Caco-2 (cell line): ENCODE measurements at regions of chr12 and their contacts with region 1.

Region 1: GRCh38 chr12:85836197-85837090 is at the start of gene RASSF9:
- DNase-seq: peak; percentile 45 to 69
- H3K4me3 ChIP-seq: peak within 1 kb of the TSS; percentile 39
- H3K4me3 Mint-ChIP-seq: peak within 1 kb of the TSS; percentile 78
- H3K27ac Mint-ChIP-seq: peak within 1 kb of the TSS; percentile 83
- H3K4me1 ChIP-seq: peaks cover 8% of the 10 kb centered on the region
- H3K4me1 Mint-ChIP-seq: peaks cover 17% of the 10 kb centered on the region
- H3K27me3 ChIP-seq: no peaks in the 10 kb centered on the region
- H3K27me3 Mint-ChIP-seq: no peaks in the 10 kb centered on the region
- CTCF ChIP-seq: no peak
- total RNA-seq, gene RASSF9: 0.20 and 0.35 TPM in 2 replicates

Region 2: DNA sequence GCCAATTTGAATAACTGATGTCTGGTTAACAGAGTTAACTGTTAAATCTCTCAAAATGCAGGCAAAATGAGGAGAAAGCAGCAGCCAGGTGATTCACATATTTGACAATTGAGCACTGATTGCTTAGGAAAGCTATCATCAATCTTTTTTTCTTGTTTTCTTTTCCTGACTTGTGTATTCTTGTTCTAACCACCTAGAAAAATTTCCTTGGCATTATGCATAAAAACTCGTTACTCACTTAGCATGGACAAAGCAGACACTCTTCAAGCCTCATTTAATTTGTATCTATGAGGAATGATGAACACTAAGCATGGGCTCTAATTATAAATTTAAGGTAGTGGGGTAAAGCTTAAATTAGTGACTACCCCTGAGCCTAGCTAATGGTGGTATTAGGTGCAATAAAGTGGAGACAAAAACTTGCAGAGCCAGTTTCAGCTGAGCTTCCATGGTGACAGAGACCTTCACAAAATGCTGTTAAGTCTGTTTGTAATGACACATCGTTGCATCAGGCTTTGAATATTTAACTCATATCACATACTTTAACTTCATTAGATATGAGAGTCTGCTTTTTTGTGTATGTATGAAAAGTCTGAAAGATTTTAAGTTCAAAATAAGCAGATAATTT is 52.2 kb before region 1 on chr12:
- CTCF ChIA-PET with region 1: no interaction called
- POLR2A ChIA-PET with region 1: no interaction called
- intact Hi-C with region 1: no loop called
- DNase-seq: peak in 1 of 2 experiments; percentile 7
- H3K4me3 ChIP-seq: no peak overlapping the region
- H3K4me3 Mint-ChIP-seq: no peak overlapping the region
- H3K27ac Mint-ChIP-seq: no peak overlapping the region
- H3K4me1 ChIP-seq: peaks cover 16% of the 10 kb centered on the region; the same call in 1 of the 2 replicates
- H3K4me1 Mint-ChIP-seq: no peaks in the 10 kb centered on the region
- H3K27me3 ChIP-seq: no peaks in the 10 kb centered on the region
- H3K27me3 Mint-ChIP-seq: peaks cover 2% of the 10 kb centered on the region
- CTCF ChIP-seq: no peak

Region 3: GRCh38 chr12:85794531-85794930 is 41.9 kb before region 1 on chr12:
- CTCF ChIA-PET with region 1: no interaction called
- POLR2A ChIA-PET with region 1: no interaction called
- intact Hi-C with region 1: no loop called
- DNase-seq: no peak
- H3K4me3 ChIP-seq: no peak overlapping the region
- H3K4me3 Mint-ChIP-seq: no peak overlapping the region
- H3K27ac Mint-ChIP-seq: no peak overlapping the region
- H3K4me1 ChIP-seq: no peaks in the 10 kb centered on the region
- H3K4me1 Mint-ChIP-seq: no peaks in the 10 kb centered on the region
- H3K27me3 ChIP-seq: no peaks in the 10 kb centered on the region
- H3K27me3 Mint-ChIP-seq: no peaks in the 10 kb centered on the region
- CTCF ChIP-seq: no peak

Region 4: GRCh38 chr12:85821759-85822158 is 14.7 kb before region 1 on chr12:
- CTCF ChIA-PET with region 1: interaction called, 5 read pairs
- POLR2A ChIA-PET with region 1: interaction called, 3 read pairs
- intact Hi-C with region 1: loop called (anchors 1 kb)
- DNase-seq: peak; percentile 45 to 64
- H3K4me3 ChIP-seq: no peak overlapping the region
- H3K4me3 Mint-ChIP-seq: no peak overlapping the region
- H3K27ac Mint-ChIP-seq: no peak overlapping the region
- H3K4me1 ChIP-seq: peaks cover 20% of the 10 kb centered on the region
- H3K4me1 Mint-ChIP-seq: peaks cover 7% of the 10 kb centered on the region
- H3K27me3 ChIP-seq: no peaks in the 10 kb centered on the region; the same call in 1 of the 2 replicates
- H3K27me3 Mint-ChIP-seq: peaks cover 9% of the 10 kb centered on the region
- CTCF ChIP-seq: no peak